Activated CD4-positive, alpha-beta T cell treated with anti-CD3 and anti-CD28 coated beads for 36 hours (primary cell): ENCODE measurements at regions of chr5 and their contacts with region 1.

Region 1: DNA sequence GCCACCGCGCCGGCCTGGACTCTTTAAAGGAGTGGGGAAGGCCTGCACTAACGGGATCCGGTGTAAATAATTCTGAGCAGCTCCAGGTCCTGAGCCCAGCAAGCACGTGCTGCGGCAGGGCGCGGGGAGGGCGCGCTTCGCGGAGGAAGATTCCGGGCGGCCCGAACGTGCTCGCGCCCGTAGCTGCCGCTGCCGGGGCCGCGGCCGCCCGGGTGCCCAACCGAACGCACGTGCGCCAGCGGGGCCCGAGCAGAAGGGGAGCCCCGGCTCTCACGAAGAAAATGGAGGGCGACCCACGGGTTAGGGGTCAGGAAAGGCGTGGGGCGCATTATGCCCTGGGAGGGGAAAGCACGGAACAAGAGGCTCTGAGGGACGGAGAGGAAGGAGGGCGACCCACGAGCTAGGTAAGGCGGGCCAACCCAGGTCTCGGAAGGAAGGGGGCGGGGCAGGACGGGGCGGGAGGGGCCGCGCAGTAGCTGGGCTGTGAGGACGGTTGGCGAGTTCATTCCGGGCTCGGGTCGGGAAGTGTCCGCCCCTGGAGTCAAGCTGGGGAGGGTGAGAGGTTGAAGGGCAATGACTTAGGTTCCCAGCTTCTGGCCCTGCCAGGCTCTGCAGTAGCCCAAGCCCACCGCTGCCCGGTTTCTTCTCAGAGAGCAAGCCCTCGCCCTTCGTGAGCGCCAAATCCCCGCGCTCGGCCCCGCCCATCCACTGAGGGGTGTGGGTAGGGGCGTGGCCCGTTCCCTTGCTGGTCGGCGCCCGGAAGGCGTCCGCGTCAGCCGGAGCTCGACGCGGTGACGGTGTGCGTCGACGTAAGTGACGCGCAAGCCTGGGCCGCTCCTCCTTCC is at the start of gene ZNF131:
- DNase-seq: peak; percentile 98
- ATAC-seq: peak; percentile 93
- H3K4me3 Mint-ChIP-seq: peak within 1 kb of the TSS; percentile 94
- H3K27ac Mint-ChIP-seq: peak within 1 kb of the TSS; percentile 94
- H3K4me1 Mint-ChIP-seq: peaks cover 35% of the 10 kb centered on the region
- H3K27me3 Mint-ChIP-seq: no peaks in the 10 kb centered on the region
- total RNA-seq, gene ZNF131: 30.9 to 33.4 TPM

Region 2: GRCh38 chr5:41903892-41904799 is 1216.8 kb before region 1 on chr5 and contains the start of gene RIMOC1:
- CTCF ChIA-PET with region 1: no interaction called
- POLR2A ChIA-PET with region 1: no interaction called
- intact Hi-C with region 1: loop called in 1 of 2 experiments (anchors 10 kb)
- DNase-seq: peak; percentile 98
- ATAC-seq: peak; percentile 97
- H3K4me3 Mint-ChIP-seq: peak within 1 kb of the TSS; percentile 91
- H3K27ac Mint-ChIP-seq: peak within 1 kb of the TSS; percentile 98
- H3K4me1 Mint-ChIP-seq: peaks cover 47% of the 10 kb centered on the region
- H3K27me3 Mint-ChIP-seq: no peaks in the 10 kb centered on the region
- total RNA-seq, gene RIMOC1: 25.4 to 26.7 TPM

Region 3: DNA sequence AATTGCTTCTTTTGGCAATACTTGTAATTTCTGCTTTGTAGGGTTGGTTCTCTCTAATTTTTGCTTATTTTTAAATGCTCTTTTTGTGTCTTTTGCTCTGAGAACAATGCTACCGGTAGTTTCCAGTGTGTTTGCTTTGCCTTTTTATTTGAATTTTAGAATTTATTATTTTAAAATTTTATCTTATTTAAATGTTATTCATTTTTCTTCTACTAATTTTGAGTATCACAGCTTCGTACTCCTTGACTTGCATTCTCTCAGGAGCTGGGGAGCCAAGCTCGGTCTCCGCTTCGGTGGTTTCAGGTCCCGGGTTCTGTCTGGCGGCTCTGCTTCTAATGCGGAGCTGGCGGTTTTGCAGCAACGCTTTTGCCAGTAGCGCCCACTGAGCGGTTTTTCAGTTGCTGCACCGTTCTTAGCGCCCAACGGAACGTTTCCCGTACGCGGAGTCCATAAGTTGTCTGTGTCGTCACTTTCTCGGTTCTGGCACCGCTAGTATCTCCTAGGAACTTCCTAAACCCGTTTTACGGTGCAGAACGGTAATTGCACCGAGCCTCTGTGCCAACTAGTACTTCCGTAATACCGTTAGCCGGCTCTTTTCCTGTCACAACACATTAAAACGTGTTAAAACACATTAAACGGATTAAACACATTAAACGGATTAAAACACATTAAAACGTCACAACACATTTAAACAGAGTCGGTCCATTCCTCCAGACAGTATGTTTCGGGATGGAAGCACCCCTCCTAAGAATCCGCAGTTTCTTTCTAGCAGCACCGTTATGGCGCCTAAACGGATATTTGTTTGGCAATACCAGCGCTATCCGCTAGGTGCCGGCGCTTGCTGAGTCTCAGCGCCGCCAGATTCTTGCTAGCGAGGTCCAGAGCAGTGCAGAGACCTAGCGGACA is 126.4 kb before region 1 on chr5:
- CTCF ChIA-PET with region 1: interaction called, 6 read pairs
- POLR2A ChIA-PET with region 1: interaction called, 3 read pairs
- intact Hi-C with region 1: loop called in 1 of 2 experiments (anchors 1 kb)
- DNase-seq: peak; percentile 93
- ATAC-seq: peak; percentile 67
- H3K4me3 Mint-ChIP-seq: peak overlapping the region; percentile 98
- H3K27ac Mint-ChIP-seq: peak overlapping the region; percentile 100
- H3K4me1 Mint-ChIP-seq: peaks cover 25% of the 10 kb centered on the region
- H3K27me3 Mint-ChIP-seq: no peaks in the 10 kb centered on the region

Region 4: GRCh38 chr5:43019614-43020293 is 101.2 kb before region 1 on chr5:
- CTCF ChIA-PET with region 1: interaction called, 5 read pairs
- POLR2A ChIA-PET with region 1: interaction called, 3 read pairs
- intact Hi-C with region 1: loop called in 1 of 2 experiments (anchors 1 kb)
- DNase-seq: peak; percentile 91
- ATAC-seq: peak; percentile 70
- H3K4me3 Mint-ChIP-seq: peak overlapping the region; percentile 94
- H3K27ac Mint-ChIP-seq: peak overlapping the region; percentile 99
- H3K4me1 Mint-ChIP-seq: peaks cover 33% of the 10 kb centered on the region
- H3K27me3 Mint-ChIP-seq: no peaks in the 10 kb centered on the region

Region 5: GRCh38 chr5:43105369-43106289 is 15.3 kb before region 1 on chr5:
- CTCF ChIA-PET with region 1: interaction called, 123 read pairs
- POLR2A ChIA-PET with region 1: interaction called, 5 read pairs
- intact Hi-C with region 1: loop called (anchors 1 kb)
- DNase-seq: peak; percentile 93
- ATAC-seq: peak; percentile 91
- H3K4me3 Mint-ChIP-seq: peak overlapping the region; percentile 71
- H3K27ac Mint-ChIP-seq: peak overlapping the region; percentile 91
- H3K4me1 Mint-ChIP-seq: peaks cover 43% of the 10 kb centered on the region
- H3K27me3 Mint-ChIP-seq: no peaks in the 10 kb centered on the region

Region 6: GRCh38 chr5:43396762-43397304 is 275.9 kb after region 1 on chr5:
- CTCF ChIA-PET with region 1: no interaction called
- POLR2A ChIA-PET with region 1: interaction called, 3 read pairs
- intact Hi-C with region 1: loop called in 1 of 2 experiments (anchors 5 kb)
- DNase-seq: peak; percentile 82
- ATAC-seq: peak; percentile 97
- H3K4me3 Mint-ChIP-seq: peak overlapping the region; percentile 84
- H3K27ac Mint-ChIP-seq: peak overlapping the region; percentile 96
- H3K4me1 Mint-ChIP-seq: peaks cover 26% of the 10 kb centered on the region
- H3K27me3 Mint-ChIP-seq: no peaks in the 10 kb centered on the region

Region 7: GRCh38 chr5:43602461-43603343 is 481.8 kb after region 1 on chr5 and contains the start of gene NNT:
- CTCF ChIA-PET with region 1: no interaction called
- POLR2A ChIA-PET with region 1: no interaction called
- intact Hi-C with region 1: loop called in 1 of 2 experiments (anchors 2 kb)
- DNase-seq: peak; percentile 89
- ATAC-seq: peak; percentile 76
- H3K4me3 Mint-ChIP-seq: peak within 1 kb of the TSS; percentile 95
- H3K27ac Mint-ChIP-seq: peak within 1 kb of the TSS; percentile 93
- H3K4me1 Mint-ChIP-seq: peaks cover 29% of the 10 kb centered on the region
- H3K27me3 Mint-ChIP-seq: no peaks in the 10 kb centered on the region
- total RNA-seq, gene NNT: 55.4 to 77.5 TPM